Activated T-helper 1 cell treated with anti-CD3 and anti-CD28 coated beads, Interleukin-12 subunit alpha, Interleukin-12 subunit beta, Interleukin-2, Interleukin-4 antibody, amounts not matched to agents 30 ng/mL and 10 ng/mL and 1 ng/mL, durations not matched to agents 14 hours and 24 hours and 36 hours (primary cell): ENCODE measurements at regions of chr22 and their contacts with region 1.

Region 1: GRCh38 chr22:21735200-21736076 is at the start of gene YPEL1:
- DNase-seq: peak; percentile 96
- H3K4me3 Mint-ChIP-seq: peak within 1 kb of the TSS; percentile 85
- H3K27ac Mint-ChIP-seq: peak within 1 kb of the TSS; percentile 85
- H3K4me1 Mint-ChIP-seq: peaks cover 32% of the 10 kb centered on the region
- H3K27me3 Mint-ChIP-seq: peaks cover 19% of the 10 kb centered on the region
- total RNA-seq, gene YPEL1: 0.34 and 0.71 TPM in 2 replicates

Region 2: GRCh38 chr22:21629262-21630149 is 105.9 kb before region 1 on chr22 and contains the start of gene YDJC:
- intact Hi-C with region 1: loop called (anchors 5 kb)
- DNase-seq: peak; percentile 93
- H3K4me3 Mint-ChIP-seq: peak within 1 kb of the TSS; percentile 91
- H3K27ac Mint-ChIP-seq: peak within 1 kb of the TSS; percentile 92
- H3K4me1 Mint-ChIP-seq: peaks cover 28% of the 10 kb centered on the region
- H3K27me3 Mint-ChIP-seq: no peaks in the 10 kb centered on the region
- total RNA-seq, gene YDJC: 51.7 and 51.8 TPM in 2 replicates

Region 3: GRCh38 chr22:21666786-21667185 is 68.7 kb before region 1 on chr22:
- intact Hi-C with region 1: loop called (anchors 2 kb)
- DNase-seq: no peak
- H3K4me3 Mint-ChIP-seq: peak overlapping the region; percentile 99
- H3K27ac Mint-ChIP-seq: peak overlapping the region; percentile 97
- H3K4me1 Mint-ChIP-seq: peaks cover 30% of the 10 kb centered on the region
- H3K27me3 Mint-ChIP-seq: no peaks in the 10 kb centered on the region

Region 4: GRCh38 chr22:21754523-21754922 is 19.1 kb after region 1 on chr22:
- intact Hi-C with region 1: no loop called
- DNase-seq: no peak
- H3K4me3 Mint-ChIP-seq: no peak overlapping the region
- H3K27ac Mint-ChIP-seq: no peak overlapping the region
- H3K4me1 Mint-ChIP-seq: peaks cover 11% of the 10 kb centered on the region
- H3K27me3 Mint-ChIP-seq: no peaks in the 10 kb centered on the region

Region 5: DNA sequence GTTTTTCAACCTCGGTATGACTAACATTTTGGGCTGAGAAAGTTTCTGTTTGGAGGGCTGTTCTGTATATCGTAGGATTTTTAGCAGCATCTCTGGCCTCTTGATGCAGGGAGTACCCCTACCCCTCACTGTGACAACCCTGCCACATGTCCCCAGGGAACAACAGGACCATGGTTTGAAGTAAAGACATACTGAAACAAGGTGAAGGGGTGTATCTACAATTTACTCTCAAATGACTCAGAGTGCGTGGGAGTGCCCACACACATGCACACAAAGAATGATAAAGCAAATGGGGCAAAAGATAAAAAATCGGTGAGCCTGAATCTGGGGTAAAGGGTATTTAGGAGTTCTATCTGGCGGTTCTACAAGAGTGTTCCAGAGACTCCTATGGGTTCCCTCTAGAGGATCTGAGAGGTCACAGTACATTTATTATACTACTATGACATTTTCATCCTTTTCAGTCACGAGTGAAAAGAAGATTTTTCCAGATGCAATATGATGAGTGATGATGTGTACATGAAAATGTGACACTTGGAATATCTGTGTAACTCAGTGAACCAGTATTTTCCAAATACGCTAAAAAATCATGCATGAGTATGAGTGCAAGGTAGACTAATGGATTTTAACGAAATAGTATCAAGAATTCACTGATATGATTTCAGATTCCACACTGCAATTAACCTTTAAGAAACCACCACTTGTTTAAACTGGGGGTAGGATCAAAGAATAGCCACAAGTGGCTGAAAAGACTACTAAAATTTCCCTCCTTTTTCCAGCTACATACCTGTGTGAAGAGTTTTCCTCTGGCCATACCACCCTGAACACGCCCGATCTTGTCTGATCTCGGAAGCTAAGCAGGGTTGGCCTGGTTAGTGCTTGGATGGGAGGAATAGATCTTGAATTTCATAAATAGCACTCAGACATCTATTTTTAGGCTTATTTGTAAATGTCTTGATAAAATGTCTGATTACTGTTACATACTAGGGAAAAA is 56.5 kb after region 1 on chr22:
- intact Hi-C with region 1: loop called (anchors 1 kb)
- DNase-seq: peak; percentile 12
- H3K4me3 Mint-ChIP-seq: no peak overlapping the region
- H3K27ac Mint-ChIP-seq: peak overlapping the region; percentile 72
- H3K4me1 Mint-ChIP-seq: peaks cover 12% of the 10 kb centered on the region
- H3K27me3 Mint-ChIP-seq: no peaks in the 10 kb centered on the region